MCF 10A (cell line): ENCODE measurements at regions of chr17 and their contacts with region 1.

Region 1: GRCh38 chr17:4199818-4200402 is 56.9 kb downstream of the CYB5D2 start:
- DNase-seq: peak; percentile 55
- H3K4me3 Mint-ChIP-seq: no peak overlapping the region
- H3K27ac Mint-ChIP-seq: no peak overlapping the region
- H3K4me1 Mint-ChIP-seq: peaks cover 5% of the 10 kb centered on the region
- H3K27me3 Mint-ChIP-seq: no peaks in the 10 kb centered on the region
- CTCF ChIP-seq: peak; percentile 60

Region 2: DNA sequence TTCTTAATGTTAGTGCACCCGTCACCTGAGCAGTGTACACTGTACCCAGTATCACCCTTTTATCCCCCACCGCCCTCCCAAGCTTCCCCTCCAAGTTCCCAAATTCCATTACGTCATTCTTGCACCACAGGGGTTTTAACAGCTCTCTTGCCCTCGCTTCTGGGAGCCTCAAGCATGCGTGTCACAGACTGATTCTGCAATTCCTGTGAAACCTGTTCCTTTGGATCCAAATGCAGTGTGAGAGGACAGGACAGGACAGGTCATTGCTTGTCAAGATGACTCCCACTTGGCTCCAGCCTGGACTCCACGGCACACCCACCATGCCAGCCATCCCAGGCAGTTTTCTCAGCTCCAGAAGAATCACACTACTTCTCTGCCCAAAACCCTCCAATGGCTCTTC is 12.8 kb before region 1 on chr17:
- CTCF ChIA-PET with region 1: interaction called, 12 read pairs
- POLR2A ChIA-PET with region 1: interaction called, 5 read pairs
- intact Hi-C with region 1: no loop called
- DNase-seq: peak; percentile 86
- H3K4me3 Mint-ChIP-seq: no peak overlapping the region
- H3K27ac Mint-ChIP-seq: no peak overlapping the region
- H3K4me1 Mint-ChIP-seq: peaks cover 11% of the 10 kb centered on the region
- H3K27me3 Mint-ChIP-seq: no peaks in the 10 kb centered on the region
- CTCF ChIP-seq: no peak

Region 3: DNA sequence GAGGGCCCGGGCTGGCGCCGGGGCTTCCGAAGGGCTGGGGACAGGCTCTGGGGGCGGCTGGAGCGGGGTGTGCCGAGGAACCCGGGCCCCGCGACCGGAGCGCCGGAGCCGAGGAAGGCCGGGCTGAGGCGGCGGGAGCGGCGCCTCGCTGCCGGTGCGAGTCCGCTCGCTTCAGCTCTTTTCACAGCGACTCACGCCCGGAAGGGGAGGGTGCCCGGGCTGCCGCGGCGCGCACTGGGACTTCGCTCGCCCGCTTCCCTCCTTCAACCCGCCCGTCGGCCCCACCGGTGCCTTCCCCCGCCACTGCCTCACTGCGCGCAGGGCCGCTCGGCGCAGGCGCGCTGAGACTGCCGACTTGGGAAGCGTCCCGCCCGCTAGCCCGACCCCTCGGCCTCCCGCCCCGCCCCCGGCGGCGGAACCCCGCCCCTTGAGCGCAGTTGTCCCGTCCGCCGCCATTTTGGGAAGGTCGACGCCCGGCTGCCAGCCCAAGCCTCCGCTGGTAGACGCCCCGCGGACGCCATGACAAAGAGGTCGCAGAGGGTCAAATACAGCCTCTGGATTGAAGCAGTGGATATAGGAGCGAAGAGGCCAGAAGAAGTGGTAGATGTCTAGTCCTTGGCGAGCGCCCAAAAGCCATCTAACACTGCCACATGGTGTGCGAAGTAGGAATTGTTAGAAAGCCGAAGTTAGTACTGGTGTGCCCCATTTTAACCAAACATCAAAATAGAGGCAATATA is 166.6 kb after region 1 on chr17 and contains the start of gene UBE2G1:
- CTCF ChIA-PET with region 1: interaction called, 3 read pairs
- POLR2A ChIA-PET with region 1: no interaction called
- intact Hi-C with region 1: loop called (anchors 5 kb)
- DNase-seq: peak; percentile 95
- H3K4me3 Mint-ChIP-seq: peak within 1 kb of the TSS; percentile 80
- H3K27ac Mint-ChIP-seq: peak within 1 kb of the TSS; percentile 87
- H3K4me1 Mint-ChIP-seq: peaks cover 12% of the 10 kb centered on the region
- H3K27me3 Mint-ChIP-seq: no peaks in the 10 kb centered on the region
- CTCF ChIP-seq: peak; percentile 31
- total RNA-seq, gene UBE2G1: 65.1 and 78.5 TPM in 2 replicates

Region 4: DNA sequence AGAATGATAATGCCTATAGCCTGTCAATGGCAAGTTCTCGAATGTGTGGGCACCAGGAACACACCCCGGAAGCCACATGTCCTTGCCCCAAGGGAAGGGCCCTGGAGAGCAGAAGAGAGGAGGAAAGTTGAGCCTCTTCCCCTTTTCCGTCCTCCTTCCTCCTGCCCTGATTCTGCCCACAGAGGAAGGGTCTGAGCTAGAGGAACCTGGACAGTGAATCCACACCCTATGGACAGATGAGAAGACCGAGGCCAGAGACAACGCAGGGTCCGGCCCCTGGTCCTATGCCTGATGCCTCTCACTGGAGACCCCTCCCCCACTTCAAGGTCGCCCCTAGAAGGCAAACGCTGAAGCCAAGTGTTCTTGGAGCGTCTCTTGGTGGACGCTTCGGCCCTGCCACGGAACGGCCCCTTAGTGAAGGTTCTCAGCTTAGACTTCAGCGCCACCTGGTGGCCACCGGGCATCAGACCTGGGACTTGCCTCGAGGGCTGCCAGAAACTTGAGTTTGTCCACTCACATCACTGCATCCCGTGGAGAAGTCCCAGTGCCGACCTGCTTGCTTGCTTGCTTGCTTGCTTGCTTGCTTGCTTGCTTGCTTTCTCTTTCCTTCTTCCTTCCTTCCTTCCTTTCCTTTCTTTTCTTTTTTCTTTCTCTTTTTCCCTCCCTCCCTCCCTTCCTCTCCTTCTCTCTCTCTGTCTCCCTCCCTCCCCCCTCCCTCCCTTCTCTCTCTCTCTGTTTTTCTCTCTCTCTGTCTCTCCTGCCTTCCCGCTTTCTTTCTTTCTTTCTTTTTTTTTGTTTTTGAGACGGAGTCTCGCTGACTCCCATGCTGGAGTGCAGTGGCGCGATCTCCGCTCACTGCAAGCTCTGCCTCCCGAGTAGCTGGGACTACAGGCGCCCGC is 213.3 kb after region 1 on chr17:
- CTCF ChIA-PET with region 1: interaction called, 8 read pairs
- POLR2A ChIA-PET with region 1: interaction called, 6 read pairs
- intact Hi-C with region 1: loop called (anchors 1 kb)
- DNase-seq: peak; percentile 83
- H3K4me3 Mint-ChIP-seq: no peak overlapping the region
- H3K27ac Mint-ChIP-seq: no peak overlapping the region
- H3K4me1 Mint-ChIP-seq: peaks cover 9% of the 10 kb centered on the region
- H3K27me3 Mint-ChIP-seq: no peaks in the 10 kb centered on the region
- CTCF ChIP-seq: peak; percentile 90

Region 5: GRCh38 chr17:4520894-4521600 is 321.1 kb after region 1 on chr17:
- CTCF ChIA-PET with region 1: no interaction called
- POLR2A ChIA-PET with region 1: no interaction called
- intact Hi-C with region 1: loop called (anchors 5 kb)
- DNase-seq: peak; percentile 73
- H3K4me3 Mint-ChIP-seq: no peak overlapping the region
- H3K27ac Mint-ChIP-seq: peak overlapping the region; percentile 69
- H3K4me1 Mint-ChIP-seq: peaks cover 12% of the 10 kb centered on the region
- H3K27me3 Mint-ChIP-seq: no peaks in the 10 kb centered on the region
- CTCF ChIP-seq: no peak